ENCODE measurements at regions of chr11 and their contacts with region 1.

Region 1: GRCh38 chr11:110173811-110174644 is 80.8 kb downstream of the ZC3H12C start:
- DNase-seq: no peak
- H3K4me3 ChIP-seq: peak overlapping the region; percentile 29; the same call in 1 of the 2 replicates
- CTCF ChIP-seq: peak; percentile 75

Region 2: DNA sequence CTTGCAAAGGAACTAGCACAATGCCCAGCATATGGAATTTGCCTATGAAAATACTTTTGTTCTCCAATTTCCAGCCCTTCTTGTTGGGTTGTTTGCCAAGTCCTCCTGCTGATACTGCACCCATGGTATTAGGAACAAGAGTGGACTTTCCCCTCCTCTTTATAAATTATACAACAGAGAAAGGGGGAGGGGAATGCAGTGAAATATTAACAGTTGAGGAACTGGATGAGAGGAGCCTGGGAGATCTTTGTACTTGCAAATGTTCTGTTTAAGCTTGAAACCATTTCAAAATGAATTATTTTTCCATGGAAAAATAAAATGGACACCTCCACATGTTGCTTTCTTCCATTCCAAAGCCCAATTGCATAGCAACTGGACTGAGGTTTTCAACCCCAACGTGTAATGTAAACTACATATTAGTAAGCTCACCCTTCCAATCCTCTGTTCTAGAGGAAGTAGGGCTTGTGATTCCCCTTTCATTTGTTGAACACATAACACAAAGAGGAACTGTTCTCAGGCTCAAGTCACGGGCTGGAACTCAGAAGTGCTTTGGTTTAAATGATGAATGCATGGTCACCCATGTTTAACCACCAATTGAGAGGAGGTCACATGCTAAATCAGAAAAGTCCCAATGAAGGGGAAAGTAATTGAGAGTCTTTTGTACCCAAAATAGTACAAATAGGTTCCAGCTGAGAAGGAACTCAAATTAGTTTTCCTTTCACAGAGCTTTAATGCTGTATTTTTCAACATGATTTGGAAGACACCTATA is 147.0 kb before region 1 on chr11:
- CTCF ChIA-PET with region 1: no interaction called
- POLR2A ChIA-PET with region 1: no interaction called
- DNase-seq: no peak
- H3K4me3 ChIP-seq: no peak overlapping the region
- CTCF ChIP-seq: no peak

Region 3: GRCh38 chr11:110185121-110185591 is 11.1 kb after region 1 on chr11:
- CTCF ChIA-PET with region 1: interaction called, 22 read pairs
- POLR2A ChIA-PET with region 1: no interaction called
- DNase-seq: no peak
- H3K4me3 ChIP-seq: no peak overlapping the region
- CTCF ChIP-seq: no peak

Measured in AG04449 (cell line).